Psoas muscle (tissue), 8 donors: ENCODE measurements at regions of chr18 and their contacts with region 1.

Region 1: DNA sequence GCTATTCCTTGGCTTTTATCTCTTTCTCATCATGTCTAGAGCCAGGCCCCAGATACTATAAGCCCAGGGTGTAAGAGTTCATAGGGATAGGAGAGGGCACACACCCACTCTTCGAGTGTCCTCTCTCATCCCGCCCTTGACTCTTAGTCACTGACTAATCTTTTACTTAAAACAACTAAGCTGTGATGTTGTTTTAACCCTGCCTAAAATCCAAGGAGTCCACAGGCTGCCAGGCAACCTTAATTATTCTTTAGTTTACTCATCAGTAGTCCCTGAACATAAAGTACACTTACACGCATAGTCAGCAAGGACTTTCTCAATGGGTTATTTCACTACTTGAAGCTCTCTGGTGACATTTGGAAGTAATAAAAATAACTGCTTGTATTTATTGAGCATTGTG is 28.4 kb downstream of the GREB1L start:
- DNase-seq: no peak
- ATAC-seq: no peak
- H3K4me3 ChIP-seq: no peak overlapping the region
- H3K27ac ChIP-seq: no peak overlapping the region
- H3K4me1 ChIP-seq: no peaks in the 10 kb centered on the region
- H3K27me3 ChIP-seq: no peaks in the 10 kb centered on the region
- CTCF ChIP-seq: no peak

Region 2: DNA sequence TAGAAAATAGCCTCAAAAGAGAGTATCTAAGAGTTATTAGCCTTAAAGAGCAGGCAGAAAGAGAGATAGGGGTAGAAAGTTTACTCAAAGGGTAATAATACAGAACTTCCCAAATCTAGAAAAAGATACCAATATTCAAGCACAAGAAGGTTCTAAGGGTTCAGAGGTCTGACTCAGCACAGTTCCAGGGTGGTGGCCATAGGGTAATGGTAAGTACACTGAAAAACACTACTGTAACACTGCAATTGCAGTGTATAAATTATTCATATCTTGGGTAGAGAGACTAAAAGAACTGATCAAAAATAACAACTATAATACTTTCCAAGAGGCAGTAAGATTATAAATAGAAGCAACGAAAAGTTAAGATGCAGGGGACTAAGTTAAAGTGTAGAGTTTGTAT is 274.0 kb before region 1 on chr18:
- intact Hi-C with region 1: no loop called
- DNase-seq: no peak
- ATAC-seq: no peak
- H3K4me3 ChIP-seq: no peak overlapping the region
- H3K27ac ChIP-seq: no peak overlapping the region
- H3K4me1 ChIP-seq: peaks cover 8% of the 10 kb centered on the region
- H3K27me3 ChIP-seq: no peaks in the 10 kb centered on the region
- CTCF ChIP-seq: no peak

Region 3: GRCh38 chr18:21330122-21330701 is 59.8 kb after region 1 on chr18:
- intact Hi-C with region 1: loop called in 1 of 2 experiments (anchors 10 kb)
- DNase-seq: peak in 1 of 2 donors; percentile 15
- ATAC-seq: peak in 3 of 4 donors; percentile 49 to 79 (median 63)
- H3K4me3 ChIP-seq: no peak overlapping the region
- H3K27ac ChIP-seq: no peak overlapping the region
- H3K4me1 ChIP-seq: no peaks in the 10 kb centered on the region
- H3K27me3 ChIP-seq: no peaks in the 10 kb centered on the region
- CTCF ChIP-seq: no peak

Region 4: GRCh38 chr18:21345840-21346239 is 75.4 kb after region 1 on chr18:
- intact Hi-C with region 1: no loop called
- DNase-seq: no peak
- ATAC-seq: no peak
- H3K4me3 ChIP-seq: no peak overlapping the region
- H3K27ac ChIP-seq: no peak overlapping the region
- H3K4me1 ChIP-seq: no peaks in the 10 kb centered on the region
- H3K27me3 ChIP-seq: no peaks in the 10 kb centered on the region
- CTCF ChIP-seq: no peak

Region 5: GRCh38 chr18:21968338-21968737 is 697.9 kb after region 1 on chr18:
- intact Hi-C with region 1: no loop called
- DNase-seq: no peak
- ATAC-seq: no peak
- H3K4me3 ChIP-seq: no peak overlapping the region
- H3K27ac ChIP-seq: no peak overlapping the region
- H3K4me1 ChIP-seq: no peaks in the 10 kb centered on the region
- H3K27me3 ChIP-seq: peaks cover 0 to 3% (median 0%) of the 10 kb centered on the region in 3 donors
- CTCF ChIP-seq: no peak